OCI-LY7 (cell line): ENCODE measurements at regions of chr11 and their contacts with region 1.

Region 1: GRCh38 chr11:67640021-67640757 is 626 bp upstream of the TBX10 start:
- DNase-seq: peak; percentile 82
- H3K4me3 ChIP-seq: no peak overlapping the region
- H3K27ac ChIP-seq: no peak overlapping the region
- H3K4me1 ChIP-seq: peaks cover 20% of the 10 kb centered on the region
- CTCF ChIP-seq: peak; percentile 86

Region 2: GRCh38 chr11:67572747-67573419 is 67.3 kb before region 1 on chr11:
- CTCF ChIA-PET with region 1: interaction called, 3 read pairs
- POLR2A ChIA-PET with region 1: no interaction called
- intact Hi-C with region 1: loop called (anchors 1 kb)
- DNase-seq: peak; percentile 67
- H3K4me3 ChIP-seq: no peak overlapping the region
- H3K27ac ChIP-seq: no peak overlapping the region
- H3K4me1 ChIP-seq: peaks cover 6% of the 10 kb centered on the region
- CTCF ChIP-seq: peak; percentile 74

Region 3: DNA sequence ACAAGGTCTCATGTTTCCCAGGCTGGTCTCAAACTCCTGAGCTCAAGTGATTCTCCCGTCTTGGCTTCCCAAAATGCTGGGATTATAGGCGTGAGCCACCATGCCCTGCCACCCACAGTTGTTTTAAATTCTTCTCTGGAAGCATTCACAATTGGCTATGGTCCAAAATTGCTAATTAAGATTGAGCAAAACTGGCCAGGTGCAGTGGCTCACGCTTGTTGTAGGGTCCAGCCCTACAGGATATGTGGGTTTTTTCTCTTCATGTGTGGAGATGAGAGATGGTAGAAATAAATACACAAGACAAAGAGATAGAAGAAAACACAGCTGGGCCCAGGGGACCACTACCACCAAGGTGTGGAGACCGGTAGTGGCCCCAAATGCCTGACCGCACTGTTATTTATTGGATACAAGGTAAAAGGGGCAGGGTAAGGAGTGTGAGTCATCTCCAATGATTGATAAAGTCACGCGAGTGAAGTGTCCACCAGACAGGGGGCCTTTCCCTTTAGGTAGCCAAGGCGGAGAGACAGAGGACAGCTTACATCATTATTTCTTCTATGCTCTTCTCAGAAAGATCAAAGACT is 18.6 kb after region 1 on chr11:
- CTCF ChIA-PET with region 1: interaction called, 13 read pairs
- POLR2A ChIA-PET with region 1: interaction called, 69 read pairs
- intact Hi-C with region 1: loop called (anchors 2 kb)
- DNase-seq: peak; percentile 79
- H3K4me3 ChIP-seq: peak overlapping the region; percentile 29
- H3K27ac ChIP-seq: peak overlapping the region; percentile 89
- H3K4me1 ChIP-seq: peaks cover 26% of the 10 kb centered on the region
- CTCF ChIP-seq: no peak

Region 4: DNA sequence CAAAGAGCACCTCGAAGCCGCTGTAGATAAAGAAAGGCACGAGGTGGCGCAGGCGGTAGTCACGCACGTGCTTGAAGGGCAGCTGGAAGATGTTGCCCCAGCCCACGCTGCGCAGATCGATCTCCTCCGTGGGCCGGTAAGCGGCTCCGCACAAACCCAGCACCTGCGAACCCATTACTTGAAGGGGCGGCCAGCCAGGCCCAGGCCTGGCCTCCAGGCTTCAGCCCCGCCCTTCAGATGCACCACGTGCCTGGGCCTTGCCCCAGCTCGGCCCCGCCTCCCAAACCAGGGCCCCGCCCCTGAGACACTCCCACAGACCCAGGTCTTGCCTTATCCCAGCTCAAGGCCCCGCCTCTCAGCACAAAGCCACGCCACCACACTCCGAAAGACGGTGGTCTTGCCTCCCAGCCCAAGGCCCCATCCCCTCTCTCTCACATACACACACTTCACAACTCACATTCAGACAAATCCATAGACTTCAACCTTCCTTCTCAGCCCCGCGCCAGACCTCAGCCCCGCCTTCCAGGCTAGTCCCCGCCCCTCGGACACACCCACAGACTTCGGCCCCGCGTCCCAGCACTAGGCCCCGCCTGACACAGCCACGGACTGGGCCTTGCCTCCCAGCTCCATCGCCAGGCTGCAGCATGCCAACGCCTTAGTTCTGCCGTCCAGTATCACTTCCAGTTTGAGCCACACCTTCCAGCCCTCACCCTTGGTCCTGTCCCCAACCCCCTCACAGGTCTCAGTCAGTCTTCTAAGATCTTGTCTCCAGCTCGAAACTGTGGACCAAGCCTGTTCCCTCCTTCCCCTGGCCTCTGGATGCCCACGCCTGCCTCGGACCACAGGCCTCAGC is 356.7 kb after region 1 on chr11:
- CTCF ChIA-PET with region 1: no interaction called
- POLR2A ChIA-PET with region 1: no interaction called
- intact Hi-C with region 1: loop called (anchors 10 kb)
- DNase-seq: peak; percentile 89
- H3K4me3 ChIP-seq: peak overlapping the region; percentile 60
- H3K27ac ChIP-seq: no peak overlapping the region
- H3K4me1 ChIP-seq: peaks cover 42% of the 10 kb centered on the region
- CTCF ChIP-seq: no peak